SK-N-SH (cell line): ENCODE measurements at regions of chr12 and their contacts with region 1.

Region 1: DNA sequence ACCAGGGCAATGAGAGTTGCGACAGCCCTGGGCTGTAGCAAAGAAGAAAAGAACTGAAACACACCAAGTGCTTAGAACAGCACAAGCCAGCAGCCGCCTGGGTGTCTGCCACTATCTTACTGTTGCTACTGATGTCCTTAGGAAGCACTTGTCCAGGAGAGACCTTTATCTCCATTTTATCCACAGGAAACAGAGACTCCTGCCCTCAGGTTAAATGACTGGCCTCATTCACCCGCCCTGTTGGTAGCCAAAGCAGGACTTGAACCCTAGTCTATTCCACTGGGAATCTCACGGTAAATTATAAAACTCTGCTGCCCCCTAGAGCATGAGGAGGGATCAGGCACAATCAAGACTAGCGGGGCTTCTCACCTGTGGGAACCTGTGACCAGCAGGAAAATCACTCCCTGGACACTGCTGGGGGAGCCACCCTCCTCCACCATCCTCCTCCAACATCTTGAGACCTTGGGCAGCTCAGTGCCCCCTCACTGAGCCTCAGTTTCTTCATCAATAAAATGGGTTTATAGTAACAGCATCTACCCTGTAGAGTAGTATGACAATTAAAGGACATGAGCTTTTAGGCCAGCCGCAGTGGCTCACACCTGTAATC is 20.5 kb upstream of the TESC start:
- DNase-seq: peak; percentile 82
- H3K4me3 ChIP-seq: no peak overlapping the region; a peak in 1 of 4 replicates
- H3K27ac ChIP-seq: no peak overlapping the region
- H3K4me1 ChIP-seq: peaks cover 0 to 6% of the 10 kb centered on the region in 2 experiments; a peak in 1 of 4 replicates
- H3K27me3 ChIP-seq: no peaks in the 10 kb centered on the region
- CTCF ChIP-seq: peak; percentile 73
- EP300 ChIP-seq: no peak
- RAD21 ChIP-seq: peak; percentile 83

Region 2: DNA sequence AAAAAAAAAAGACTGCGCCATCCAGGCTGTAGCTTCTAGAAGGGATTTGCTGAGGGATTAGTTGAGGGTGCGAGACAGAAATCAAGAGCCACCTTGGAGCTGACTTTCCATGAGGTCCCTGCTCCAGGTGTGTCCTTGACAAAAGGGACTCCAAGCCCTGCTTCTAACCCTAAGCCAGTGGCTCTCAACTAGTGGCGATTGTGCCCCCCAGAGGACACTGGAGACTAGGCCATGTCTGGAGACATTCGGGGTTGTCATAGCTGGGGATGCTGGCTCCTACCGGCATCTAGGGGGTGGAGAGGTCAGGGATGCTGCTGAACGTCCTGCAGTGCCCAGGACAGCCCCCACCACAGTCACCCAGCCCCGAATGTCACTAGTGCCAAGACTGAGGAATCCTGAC is 422.4 kb before region 1 on chr12:
- CTCF ChIA-PET with region 1: interaction called, 11 read pairs
- POLR2A ChIA-PET with region 1: no interaction called
- DNase-seq: peak; percentile 55
- H3K4me3 ChIP-seq: no peak overlapping the region
- H3K27ac ChIP-seq: no peak overlapping the region
- H3K4me1 ChIP-seq: peaks cover 0 to 18% of the 10 kb centered on the region in 2 experiments; a peak in 2 of 4 replicates
- H3K27me3 ChIP-seq: peaks cover 6% of the 10 kb centered on the region; the same call in 1 of the 2 replicates
- CTCF ChIP-seq: peak; percentile 42; the same call in 1 of the 2 replicates
- EP300 ChIP-seq: no peak
- RAD21 ChIP-seq: peak; percentile 69

Region 3: GRCh38 chr12:116703214-116703795 is 416.4 kb before region 1 on chr12:
- CTCF ChIA-PET with region 1: interaction called, 27 read pairs
- POLR2A ChIA-PET with region 1: no interaction called
- DNase-seq: peak; percentile 73
- H3K4me3 ChIP-seq: peak overlapping the region in 1 of 2 experiments; percentile 11; a peak in 1 of 4 replicates
- H3K27ac ChIP-seq: no peak overlapping the region
- H3K4me1 ChIP-seq: no peaks in the 10 kb centered on the region; a peak in 1 of 4 replicates
- H3K27me3 ChIP-seq: no peaks in the 10 kb centered on the region
- CTCF ChIP-seq: peak; percentile 93
- EP300 ChIP-seq: no peak
- RAD21 ChIP-seq: peak; percentile 82

Region 4: GRCh38 chr12:116708826-116709756 is 410.6 kb before region 1 on chr12:
- CTCF ChIA-PET with region 1: interaction called, 27 read pairs
- POLR2A ChIA-PET with region 1: no interaction called
- DNase-seq: peak; percentile 74
- H3K4me3 ChIP-seq: peak overlapping the region; percentile 26 to 45
- H3K27ac ChIP-seq: no peak overlapping the region
- H3K4me1 ChIP-seq: peaks cover 3 to 24% of the 10 kb centered on the region in 2 experiments; a peak in 2 of 4 replicates
- H3K27me3 ChIP-seq: no peaks in the 10 kb centered on the region
- CTCF ChIP-seq: peak; percentile 71
- EP300 ChIP-seq: no peak; a peak in 1 of 4 replicates
- RAD21 ChIP-seq: peak; percentile 89

Region 5: GRCh38 chr12:116977465-116978380 is 142.0 kb before region 1 on chr12:
- CTCF ChIA-PET with region 1: no interaction called
- POLR2A ChIA-PET with region 1: no interaction called
- DNase-seq: no peak
- H3K4me3 ChIP-seq: no peak overlapping the region
- H3K27ac ChIP-seq: no peak overlapping the region; a peak in 1 of 4 replicates
- H3K4me1 ChIP-seq: peaks cover 19 to 26% of the 10 kb centered on the region in 2 experiments
- H3K27me3 ChIP-seq: no peaks in the 10 kb centered on the region
- CTCF ChIP-seq: no peak
- EP300 ChIP-seq: no peak
- RAD21 ChIP-seq: no peak

Region 6: GRCh38 chr12:117025481-117026151 is 94.1 kb before region 1 on chr12:
- CTCF ChIA-PET with region 1: interaction called, 96 read pairs
- POLR2A ChIA-PET with region 1: no interaction called
- DNase-seq: peak; percentile 87
- H3K4me3 ChIP-seq: no peak overlapping the region; a peak in 1 of 4 replicates
- H3K27ac ChIP-seq: peak overlapping the region in 1 of 2 experiments; percentile 51; a peak in 1 of 4 replicates
- H3K4me1 ChIP-seq: peaks cover 0 to 19% of the 10 kb centered on the region in 2 experiments; a peak in 1 of 4 replicates
- H3K27me3 ChIP-seq: no peaks in the 10 kb centered on the region
- CTCF ChIP-seq: peak; percentile 86
- EP300 ChIP-seq: no peak
- RAD21 ChIP-seq: peak; percentile 90

Region 7: DNA sequence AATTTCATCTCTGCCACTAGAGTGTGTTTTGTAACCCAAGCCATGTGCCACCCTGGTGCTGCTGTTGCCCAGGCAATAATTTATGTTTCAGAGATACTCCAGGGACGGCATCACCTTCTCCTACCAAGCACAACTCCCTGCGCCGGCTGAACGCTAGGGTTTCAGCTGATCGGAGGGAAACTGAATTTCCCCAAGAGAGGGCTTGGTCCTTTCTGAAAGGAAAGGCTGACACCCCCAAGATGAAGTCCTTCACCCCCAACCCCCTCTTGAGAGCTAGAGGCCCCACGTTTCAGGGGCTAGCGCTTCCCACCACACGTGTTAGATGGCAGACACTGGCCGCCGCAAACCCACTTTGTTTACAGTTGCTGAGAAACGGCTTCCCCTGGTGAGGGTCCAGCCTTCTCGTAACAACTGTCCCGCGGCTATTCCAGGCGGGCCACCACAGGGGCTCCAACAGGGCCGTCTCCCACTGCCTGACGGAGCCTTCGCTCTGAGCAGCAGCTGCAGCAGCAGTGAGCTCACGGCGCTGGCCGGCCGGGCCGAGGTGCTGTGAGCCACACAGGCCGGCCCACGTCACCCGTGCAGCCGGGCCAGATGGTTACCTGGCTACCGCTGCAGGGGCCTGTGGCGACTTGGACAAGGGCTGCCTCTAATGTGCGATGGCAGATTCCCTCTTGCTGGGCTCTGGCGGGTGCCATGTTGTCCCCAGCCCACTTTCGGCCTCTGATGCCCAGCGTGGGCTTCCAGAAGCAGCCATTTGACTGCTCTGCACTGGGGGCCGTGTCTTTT is 86.9 kb before region 1 on chr12:
- CTCF ChIA-PET with region 1: interaction called, 96 read pairs
- POLR2A ChIA-PET with region 1: no interaction called
- DNase-seq: no peak
- H3K4me3 ChIP-seq: no peak overlapping the region
- H3K27ac ChIP-seq: no peak overlapping the region
- H3K4me1 ChIP-seq: peaks cover 0 to 5% of the 10 kb centered on the region in 2 experiments; a peak in 1 of 4 replicates
- H3K27me3 ChIP-seq: no peaks in the 10 kb centered on the region
- CTCF ChIP-seq: no peak
- EP300 ChIP-seq: no peak
- RAD21 ChIP-seq: no peak

Region 8: DNA sequence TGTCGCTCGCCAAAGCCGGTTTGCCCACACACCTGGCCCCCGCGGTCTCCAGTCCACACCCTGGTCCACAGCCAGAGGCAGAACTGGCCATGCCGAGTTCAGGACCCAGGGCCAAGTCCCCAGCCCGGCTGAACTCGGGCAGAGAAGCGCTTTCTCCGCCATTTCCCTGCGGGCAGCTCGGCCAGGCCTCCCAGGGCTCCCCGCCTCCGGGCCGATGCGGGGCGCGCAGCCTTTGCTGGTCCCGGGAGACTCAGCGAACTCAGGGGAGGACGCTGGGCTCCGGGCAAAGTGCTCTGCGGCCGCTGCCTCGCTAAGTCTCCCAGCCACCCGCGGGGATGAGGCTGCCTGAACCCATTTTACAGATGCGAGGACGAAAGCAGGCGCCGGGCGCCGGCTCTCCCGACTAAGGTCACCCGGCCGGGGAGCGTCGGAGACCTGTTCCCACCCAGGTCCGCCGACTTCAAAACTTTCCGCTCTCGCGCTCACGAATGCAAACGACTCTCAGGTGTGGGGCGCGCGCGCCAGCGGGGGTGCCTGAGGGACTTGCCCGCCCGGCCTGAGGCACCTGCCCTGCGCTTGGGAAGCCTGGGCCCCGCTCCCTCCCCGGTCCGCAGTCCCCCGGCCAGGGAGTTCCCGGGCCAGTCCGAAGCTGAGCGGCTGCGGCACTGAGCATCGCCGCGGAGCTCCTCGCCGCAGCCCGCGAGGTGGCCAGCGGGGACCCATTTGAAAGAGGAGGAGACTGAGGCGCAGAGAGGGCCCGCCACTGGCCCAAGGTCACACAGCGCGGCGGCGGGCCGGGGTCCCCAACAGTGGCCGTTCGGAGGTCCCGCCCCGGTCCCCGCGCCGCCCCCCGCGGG is 21.1 kb before region 1 on chr12:
- CTCF ChIA-PET with region 1: interaction called, 11 read pairs
- POLR2A ChIA-PET with region 1: no interaction called
- DNase-seq: peak; percentile 67
- H3K4me3 ChIP-seq: peak overlapping the region; percentile 54 to 57
- H3K27ac ChIP-seq: no peak overlapping the region
- H3K4me1 ChIP-seq: peaks cover 5 to 10% of the 10 kb centered on the region in 2 experiments; a peak in 2 of 4 replicates
- H3K27me3 ChIP-seq: peaks cover 59% of the 10 kb centered on the region
- CTCF ChIP-seq: no peak
- EP300 ChIP-seq: no peak
- RAD21 ChIP-seq: no peak